ENCODE measurements at regions of chr11 and their contacts with region 1.

Region 1: DNA sequence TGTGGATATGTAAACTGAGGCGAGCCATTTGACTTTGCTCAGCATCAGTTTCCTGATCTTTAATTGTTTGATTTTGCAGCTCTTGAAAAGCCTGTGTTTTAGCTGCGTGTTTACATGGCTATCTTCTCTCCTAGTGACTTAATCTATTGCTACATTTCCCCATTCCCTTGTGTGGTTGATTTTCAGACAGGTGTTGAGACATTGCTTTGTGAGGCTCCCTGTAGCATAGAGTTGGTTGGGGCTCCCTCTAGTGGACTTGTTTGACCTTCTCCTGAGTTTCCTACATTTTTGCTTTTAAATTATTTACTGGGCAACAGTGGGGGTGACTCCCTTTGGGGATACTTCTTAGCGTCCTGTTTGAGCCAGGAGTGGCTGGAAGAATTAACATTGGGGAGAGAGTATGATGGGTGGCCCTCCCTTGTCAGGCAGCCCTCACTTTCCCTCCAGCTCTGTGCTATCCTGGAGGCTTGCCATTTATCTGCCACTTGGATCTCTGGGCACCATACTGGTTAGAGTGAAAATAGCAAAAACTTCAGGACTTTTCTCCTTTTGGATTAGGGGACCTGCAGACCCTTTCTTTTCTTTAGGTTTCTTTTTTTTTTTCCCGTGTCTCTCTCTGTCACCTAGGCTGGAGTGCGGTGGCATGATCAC is 9.2 kb upstream of the CBL start:
- DNase-seq: peak; percentile 50
- H3K4me3 ChIP-seq: peak overlapping the region in 1 of 8 donors; percentile 16
- H3K27ac ChIP-seq: peak overlapping the region in 6 of 8 donors; percentile 16 to 81 (median 64)
- H3K4me1 ChIP-seq: peaks cover 0 to 47% (median 8%) of the 10 kb centered on the region in 6 donors
- H3K27me3 ChIP-seq: no peaks in the 10 kb centered on the region
- CTCF ChIP-seq: peak; percentile 61 to 89 (median 81)
- POLR2A ChIP-seq: no peak

Region 2: DNA sequence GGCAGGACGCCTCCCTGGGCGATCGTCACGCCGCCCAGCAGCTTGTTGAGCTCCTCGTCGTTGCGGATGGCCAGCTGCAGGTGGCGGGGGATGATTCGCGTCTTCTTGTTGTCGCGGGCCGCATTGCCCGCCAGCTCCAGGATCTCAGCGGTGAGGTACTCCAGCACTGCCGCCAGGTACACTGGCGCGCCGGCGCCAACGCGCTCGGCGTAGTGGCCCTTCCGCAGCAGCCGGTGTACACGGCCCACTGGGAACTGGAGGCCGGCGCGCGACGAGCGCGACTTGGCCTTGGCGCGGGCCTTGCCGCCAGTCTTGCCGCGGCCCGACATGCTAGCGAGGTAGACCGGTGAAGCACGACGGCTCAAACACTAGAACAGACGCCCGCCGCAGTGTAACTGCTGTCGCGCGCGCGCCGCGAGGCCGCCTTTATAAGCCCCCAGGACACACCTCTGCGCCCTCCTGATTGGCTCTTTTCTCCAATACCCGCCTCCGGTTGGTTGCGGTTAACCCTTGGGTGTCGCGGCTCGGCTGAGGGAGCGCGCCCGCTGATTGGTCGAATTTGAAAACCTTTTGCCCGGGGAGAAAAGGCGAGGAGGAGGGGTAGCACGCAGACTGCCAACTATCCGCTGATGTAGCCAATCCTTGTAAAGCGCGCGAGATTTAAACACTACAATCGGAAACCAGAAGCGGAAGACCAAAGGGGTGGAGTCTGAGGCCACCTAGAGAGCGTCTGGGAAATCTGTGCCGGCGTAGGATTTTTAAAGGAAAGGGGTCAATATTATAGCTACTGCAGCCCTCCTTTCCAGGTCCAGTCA is 101.7 kb before region 1 on chr11:
- intact Hi-C with region 1: loop called (anchors 10 kb)
- DNase-seq: peak; percentile 98
- H3K4me3 ChIP-seq: peak overlapping the region; percentile 76 to 93 (median 83)
- H3K27ac ChIP-seq: peak overlapping the region; percentile 84 to 97 (median 94)
- H3K4me1 ChIP-seq: peaks cover 15 to 78% (median 44%) of the 10 kb centered on the region in 6 donors
- H3K27me3 ChIP-seq: no peaks in the 10 kb centered on the region
- CTCF ChIP-seq: peak in 7 of 11 experiments; percentile 2 to 74 (median 32)
- POLR2A ChIP-seq: peak; percentile 97 to 98 (median 97)